ENCODE measurements at regions of chr10 and their contacts with region 1.

Region 1: DNA sequence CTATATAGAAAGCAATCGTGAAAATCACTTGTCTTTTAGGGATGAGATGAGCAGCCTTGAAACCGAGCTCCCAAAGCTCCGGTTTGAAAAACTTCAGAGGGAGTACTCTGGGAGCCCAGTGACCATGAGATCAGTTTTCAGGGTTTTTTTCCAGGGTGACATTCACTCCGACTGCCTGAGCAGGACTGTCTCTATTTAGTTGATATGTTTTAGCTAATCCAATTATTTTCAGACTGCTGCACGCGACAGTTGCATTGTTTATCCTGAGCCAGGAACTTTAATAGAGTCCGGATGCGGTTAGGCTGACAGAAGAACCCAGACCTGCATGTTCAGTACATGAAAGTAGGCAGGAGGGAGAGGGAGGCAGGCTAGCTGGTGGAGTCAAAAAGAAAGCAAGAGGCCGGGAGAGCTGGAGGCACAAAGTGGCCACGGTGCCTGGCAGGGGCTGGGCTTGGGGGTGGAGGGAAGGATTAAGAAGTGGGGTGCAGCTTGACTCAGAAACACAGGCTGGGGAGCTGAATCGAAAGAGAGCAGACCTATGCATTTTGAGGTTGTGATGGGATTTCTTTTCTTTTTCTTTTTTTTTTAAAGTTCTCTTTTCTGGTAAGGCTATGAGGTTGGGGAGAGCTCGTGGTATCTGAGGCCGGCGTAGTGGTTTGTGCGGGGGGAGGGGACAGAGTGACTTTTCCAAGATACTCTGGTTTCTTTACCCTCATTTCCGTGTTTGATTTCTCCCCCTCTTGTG is 5.6 kb downstream of the GATA3 start:
- DNase-seq: peak; percentile 87
- H3K4me3 Mint-ChIP-seq: peak overlapping the region; percentile 98
- H3K27ac Mint-ChIP-seq: peak overlapping the region; percentile 99
- H3K4me1 Mint-ChIP-seq: peaks cover 75% of the 10 kb centered on the region
- H3K27me3 Mint-ChIP-seq: no peaks in the 10 kb centered on the region

Region 2: DNA sequence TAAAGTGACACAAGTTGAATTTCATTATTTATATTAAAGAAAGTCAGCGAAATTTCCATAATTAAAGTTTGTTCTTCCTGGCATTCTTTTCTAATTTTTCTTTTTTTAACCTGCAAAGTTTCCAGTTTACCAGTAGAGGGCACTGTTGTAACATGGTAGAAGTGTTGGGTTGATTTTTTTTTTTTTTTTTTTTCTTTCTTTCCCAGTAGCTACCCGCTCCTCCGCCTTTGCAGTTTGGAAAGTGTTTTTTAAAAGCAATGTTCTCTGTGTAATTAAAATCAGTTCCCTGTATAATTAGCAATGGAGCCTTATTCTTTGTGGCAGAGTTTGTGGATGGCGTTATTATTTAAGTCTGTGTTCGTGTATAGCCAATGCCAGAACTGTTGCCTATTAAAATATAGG is 188.1 kb before region 1 on chr10:
- CTCF ChIA-PET with region 1: no interaction called
- POLR2A ChIA-PET with region 1: no interaction called
- intact Hi-C with region 1: loop called (anchors 5 kb)
- DNase-seq: no peak
- H3K4me3 Mint-ChIP-seq: peak overlapping the region; percentile 57
- H3K27ac Mint-ChIP-seq: no peak overlapping the region
- H3K4me1 Mint-ChIP-seq: peaks cover 20% of the 10 kb centered on the region
- H3K27me3 Mint-ChIP-seq: no peaks in the 10 kb centered on the region

Region 3: DNA sequence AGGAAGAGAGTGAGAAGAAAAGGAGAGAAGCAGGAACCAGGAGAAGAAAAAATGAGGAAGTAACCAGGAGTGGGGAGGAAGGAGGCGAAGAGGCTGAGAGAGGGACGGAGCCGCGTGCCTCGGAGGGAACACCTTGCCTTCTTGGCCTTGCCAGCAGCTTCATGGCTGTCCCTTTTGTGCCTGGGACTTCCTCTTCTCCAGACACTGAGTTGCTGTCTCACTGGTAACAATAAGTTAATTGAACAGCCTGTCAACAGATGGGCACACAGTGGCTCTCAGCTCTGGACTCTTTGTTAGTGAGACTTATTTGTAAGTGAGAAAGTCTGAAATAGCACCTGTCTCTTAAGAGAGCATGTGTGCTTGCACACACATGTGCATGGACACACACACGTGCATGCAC is 77.6 kb after region 1 on chr10:
- CTCF ChIA-PET with region 1: interaction called, 10 read pairs
- POLR2A ChIA-PET with region 1: interaction called, 10 read pairs
- intact Hi-C with region 1: no loop called
- DNase-seq: peak; percentile 43
- H3K4me3 Mint-ChIP-seq: peak overlapping the region; percentile 59
- H3K27ac Mint-ChIP-seq: peak overlapping the region; percentile 86
- H3K4me1 Mint-ChIP-seq: peaks cover 57% of the 10 kb centered on the region
- H3K27me3 Mint-ChIP-seq: peaks cover 4% of the 10 kb centered on the region

Region 4: GRCh38 chr10:8245131-8245813 is 185.1 kb after region 1 on chr10:
- CTCF ChIA-PET with region 1: no interaction called
- POLR2A ChIA-PET with region 1: no interaction called
- intact Hi-C with region 1: loop called (anchors 1 kb)
- DNase-seq: no peak
- H3K4me3 Mint-ChIP-seq: peak overlapping the region; percentile 18
- H3K27ac Mint-ChIP-seq: peak overlapping the region; percentile 82
- H3K4me1 Mint-ChIP-seq: peaks cover 51% of the 10 kb centered on the region
- H3K27me3 Mint-ChIP-seq: no peaks in the 10 kb centered on the region

Region 5: GRCh38 chr10:8325024-8325980 is 265.2 kb after region 1 on chr10:
- CTCF ChIA-PET with region 1: no interaction called
- POLR2A ChIA-PET with region 1: interaction called, 10 read pairs
- intact Hi-C with region 1: no loop called
- DNase-seq: peak; percentile 53
- H3K4me3 Mint-ChIP-seq: peak overlapping the region; percentile 20
- H3K27ac Mint-ChIP-seq: peak overlapping the region; percentile 89
- H3K4me1 Mint-ChIP-seq: peaks cover 52% of the 10 kb centered on the region
- H3K27me3 Mint-ChIP-seq: peaks cover 3% of the 10 kb centered on the region

Region 6: DNA sequence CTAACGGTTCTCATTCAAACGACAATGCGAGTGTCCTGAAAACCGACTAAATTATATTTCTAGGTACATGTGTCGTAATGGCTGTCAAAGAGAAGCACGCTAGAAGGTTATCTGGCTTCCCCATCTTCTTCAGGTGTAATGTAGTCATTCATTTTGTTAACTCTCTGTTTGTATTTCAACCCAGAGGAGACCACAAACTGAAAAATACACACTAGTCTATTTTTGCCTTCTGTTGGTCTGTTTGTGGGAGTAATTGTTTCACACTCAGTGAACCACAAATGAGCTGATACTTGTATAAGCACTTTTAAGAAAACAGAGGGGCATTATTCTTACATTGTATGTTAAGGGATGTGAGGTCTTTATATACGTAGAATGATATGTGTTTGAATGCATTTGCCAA is 300.2 kb after region 1 on chr10:
- CTCF ChIA-PET with region 1: no interaction called
- POLR2A ChIA-PET with region 1: interaction called, 3 read pairs
- intact Hi-C with region 1: loop called (anchors 2 kb)
- DNase-seq: no peak
- H3K4me3 Mint-ChIP-seq: no peak overlapping the region
- H3K27ac Mint-ChIP-seq: no peak overlapping the region
- H3K4me1 Mint-ChIP-seq: peaks cover 48% of the 10 kb centered on the region
- H3K27me3 Mint-ChIP-seq: no peaks in the 10 kb centered on the region

Region 7: DNA sequence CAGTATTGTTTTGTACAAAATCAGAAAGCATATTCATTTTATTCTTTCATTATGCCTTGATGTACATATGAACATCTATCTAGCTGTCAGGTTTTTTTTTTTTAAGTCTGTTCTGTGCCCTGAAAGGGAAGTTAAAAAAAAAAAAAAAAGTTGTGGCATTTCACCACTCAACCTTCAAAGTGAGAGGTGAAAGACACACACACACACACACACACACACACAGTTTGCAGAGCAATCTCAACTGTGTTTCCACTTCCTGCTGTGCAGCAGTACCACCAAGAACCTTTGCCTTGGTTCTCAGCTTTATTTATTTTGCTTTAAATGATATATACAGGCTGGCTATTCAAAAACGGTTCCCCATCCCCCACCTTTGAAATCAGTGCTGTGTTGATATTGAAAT is 950.0 kb after region 1 on chr10:
- CTCF ChIA-PET with region 1: no interaction called
- POLR2A ChIA-PET with region 1: no interaction called
- intact Hi-C with region 1: loop called (anchors 5 kb)
- DNase-seq: peak; percentile 38
- H3K4me3 Mint-ChIP-seq: peak overlapping the region; percentile 39
- H3K27ac Mint-ChIP-seq: peak overlapping the region; percentile 79
- H3K4me1 Mint-ChIP-seq: peaks cover 54% of the 10 kb centered on the region
- H3K27me3 Mint-ChIP-seq: no peaks in the 10 kb centered on the region

Region 8: DNA sequence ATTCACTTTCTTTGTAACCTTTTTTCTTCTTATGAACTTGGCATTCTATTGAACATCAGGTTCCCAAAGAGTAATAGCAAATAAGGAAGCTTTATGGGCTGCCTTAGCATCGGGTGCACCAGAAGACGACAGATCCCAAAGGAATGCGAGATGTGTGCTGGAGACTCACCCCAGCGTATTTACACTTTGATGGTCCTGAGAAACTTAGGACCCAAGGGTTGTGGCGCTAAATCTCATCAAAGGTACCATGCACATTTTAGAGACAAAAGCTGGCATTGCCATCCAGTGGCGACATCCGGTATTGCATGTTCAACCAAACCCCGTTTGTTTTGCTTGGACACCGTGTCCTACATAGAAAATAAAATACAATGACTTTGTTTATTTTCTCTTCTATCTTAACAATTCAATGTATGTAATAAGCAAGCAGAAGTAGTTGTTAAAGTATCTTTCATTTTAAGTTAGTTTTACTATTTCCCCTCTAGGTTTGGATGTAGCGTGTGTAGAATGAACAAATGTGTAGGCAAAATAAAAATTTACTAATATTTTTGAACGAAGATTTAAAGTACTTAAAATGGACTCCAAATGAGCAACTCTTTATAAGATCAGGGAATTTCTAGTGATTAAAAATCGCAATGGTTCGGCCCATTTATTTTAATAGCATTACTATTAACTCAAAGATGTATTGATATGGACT is 1149.1 kb after region 1 on chr10:
- CTCF ChIA-PET with region 1: no interaction called
- POLR2A ChIA-PET with region 1: no interaction called
- intact Hi-C with region 1: no loop called
- DNase-seq: peak; percentile 83
- H3K4me3 Mint-ChIP-seq: no peak overlapping the region
- H3K27ac Mint-ChIP-seq: no peak overlapping the region
- H3K4me1 Mint-ChIP-seq: no peaks in the 10 kb centered on the region
- H3K27me3 Mint-ChIP-seq: peaks cover 9% of the 10 kb centered on the region

Measured in activated CD4-positive, alpha-beta memory T cell treated with anti-CD3 and anti-CD28 coated beads for 36 hours (primary cell).